ENCODE measurements at regions of chr2 and their contacts with region 1.

Region 1: GRCh38 chr2:134460583-134460998 is 206.7 kb downstream of the MGAT5 start:
- DNase-seq: peak; percentile 64 to 78
- ATAC-seq: peak; percentile 93 to 97
- H3K4me3 ChIP-seq: no peak overlapping the region
- H3K27ac ChIP-seq: no peak overlapping the region; a peak in 1 of 6 replicates
- H3K4me1 ChIP-seq: no peaks in the 10 kb centered on the region
- CTCF ChIP-seq: peak; percentile 69
- EP300 ChIP-seq: no peak
- POLR2A ChIP-seq: no peak
- RAD21 ChIP-seq: peak; percentile 85 to 89

Region 2: GRCh38 chr2:134892282-134893070 is 431.9 kb after region 1 on chr2:
- CTCF ChIA-PET with region 1: interaction called, 16 read pairs
- POLR2A ChIA-PET with region 1: no interaction called
- DNase-seq: no peak
- ATAC-seq: no peak
- H3K4me3 ChIP-seq: no peak overlapping the region
- H3K27ac ChIP-seq: no peak overlapping the region
- H3K4me1 ChIP-seq: no peaks in the 10 kb centered on the region
- CTCF ChIP-seq: no peak
- EP300 ChIP-seq: no peak
- POLR2A ChIP-seq: no peak
- RAD21 ChIP-seq: no peak

Region 3: GRCh38 chr2:134897932-134898331 is 437.3 kb after region 1 on chr2:
- CTCF ChIA-PET with region 1: interaction called, 16 read pairs
- POLR2A ChIA-PET with region 1: no interaction called
- DNase-seq: no peak
- ATAC-seq: no peak
- H3K4me3 ChIP-seq: no peak overlapping the region
- H3K27ac ChIP-seq: no peak overlapping the region
- H3K4me1 ChIP-seq: no peaks in the 10 kb centered on the region
- CTCF ChIP-seq: peak; percentile 55; the same call in 2 of the 3 replicates
- EP300 ChIP-seq: no peak
- POLR2A ChIP-seq: no peak
- RAD21 ChIP-seq: peak; percentile 52 to 76; a peak in 4 of 5 replicates